Activated CD4-positive, alpha-beta memory T cell treated with anti-CD3 and anti-CD28 coated beads, Interleukin-2, amount 10 ng/mL, durations not matched to agents 7 days and 5 days (primary cell): ENCODE measurements at regions of chr1 and their contacts with region 1.

Region 1: DNA sequence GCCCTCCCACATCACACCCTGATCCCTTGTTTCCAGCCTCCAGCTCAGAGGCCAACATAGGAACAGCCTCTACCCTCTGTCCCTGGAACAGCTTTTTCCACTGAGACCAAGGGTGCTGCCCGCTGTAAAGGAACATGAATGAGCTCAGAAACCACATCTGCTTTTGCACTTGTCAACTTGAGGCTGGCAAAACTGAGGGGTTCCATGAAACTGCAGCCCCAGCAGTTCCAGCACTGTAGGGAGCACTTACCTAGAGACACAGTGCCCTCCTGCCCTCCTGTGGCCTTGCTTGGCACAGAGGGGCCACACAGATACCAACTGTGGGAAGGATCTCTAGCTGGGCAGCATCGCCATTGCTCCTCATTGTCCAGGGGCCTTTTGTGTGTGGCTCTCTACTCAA is 51.7 kb downstream of the ITPKB start:
- DNase-seq: peak; percentile 47
- H3K4me3 Mint-ChIP-seq: no peak overlapping the region
- H3K27ac Mint-ChIP-seq: no peak overlapping the region
- H3K4me1 Mint-ChIP-seq: peaks cover 87% of the 10 kb centered on the region
- H3K27me3 Mint-ChIP-seq: no peaks in the 10 kb centered on the region

Region 2: GRCh38 chr1:226549937-226550670 is 137.3 kb before region 1 on chr1:
- CTCF ChIA-PET with region 1: no interaction called
- POLR2A ChIA-PET with region 1: no interaction called
- DNase-seq: no peak
- H3K4me3 Mint-ChIP-seq: no peak overlapping the region
- H3K27ac Mint-ChIP-seq: no peak overlapping the region
- H3K4me1 Mint-ChIP-seq: peaks cover 12% of the 10 kb centered on the region
- H3K27me3 Mint-ChIP-seq: peaks cover 85% of the 10 kb centered on the region

Region 3: DNA sequence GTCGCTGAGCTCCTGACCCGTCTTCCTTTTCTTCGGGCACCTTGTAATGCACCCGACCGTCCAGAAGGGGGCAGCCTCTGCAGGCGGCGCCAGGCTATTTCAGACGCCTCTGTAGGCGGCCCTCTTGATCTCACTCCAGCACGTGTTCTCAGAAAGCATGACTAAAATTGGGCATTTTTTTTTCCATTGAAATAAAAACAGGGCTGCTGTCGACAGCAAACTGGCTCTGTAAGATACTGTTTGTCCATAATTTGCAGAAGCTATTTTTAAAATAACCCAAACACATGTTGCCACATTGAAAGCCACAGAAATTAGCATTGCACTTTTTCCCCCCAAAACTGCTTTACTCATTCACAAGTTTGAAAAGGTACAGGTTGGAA is 60.9 kb before region 1 on chr1:
- CTCF ChIA-PET with region 1: interaction called, 22 read pairs
- POLR2A ChIA-PET with region 1: no interaction called
- DNase-seq: peak; percentile 82
- H3K4me3 Mint-ChIP-seq: no peak overlapping the region
- H3K27ac Mint-ChIP-seq: no peak overlapping the region
- H3K4me1 Mint-ChIP-seq: peaks cover 17% of the 10 kb centered on the region
- H3K27me3 Mint-ChIP-seq: peaks cover 3% of the 10 kb centered on the region

Region 4: GRCh38 chr1:226662642-226663326 is 24.6 kb before region 1 on chr1:
- CTCF ChIA-PET with region 1: interaction called, 11 read pairs
- POLR2A ChIA-PET with region 1: interaction called, 113 read pairs
- DNase-seq: peak; percentile 89
- H3K4me3 Mint-ChIP-seq: peak overlapping the region; percentile 57
- H3K27ac Mint-ChIP-seq: peak overlapping the region; percentile 92
- H3K4me1 Mint-ChIP-seq: peaks cover 86% of the 10 kb centered on the region
- H3K27me3 Mint-ChIP-seq: no peaks in the 10 kb centered on the region

Region 5: DNA sequence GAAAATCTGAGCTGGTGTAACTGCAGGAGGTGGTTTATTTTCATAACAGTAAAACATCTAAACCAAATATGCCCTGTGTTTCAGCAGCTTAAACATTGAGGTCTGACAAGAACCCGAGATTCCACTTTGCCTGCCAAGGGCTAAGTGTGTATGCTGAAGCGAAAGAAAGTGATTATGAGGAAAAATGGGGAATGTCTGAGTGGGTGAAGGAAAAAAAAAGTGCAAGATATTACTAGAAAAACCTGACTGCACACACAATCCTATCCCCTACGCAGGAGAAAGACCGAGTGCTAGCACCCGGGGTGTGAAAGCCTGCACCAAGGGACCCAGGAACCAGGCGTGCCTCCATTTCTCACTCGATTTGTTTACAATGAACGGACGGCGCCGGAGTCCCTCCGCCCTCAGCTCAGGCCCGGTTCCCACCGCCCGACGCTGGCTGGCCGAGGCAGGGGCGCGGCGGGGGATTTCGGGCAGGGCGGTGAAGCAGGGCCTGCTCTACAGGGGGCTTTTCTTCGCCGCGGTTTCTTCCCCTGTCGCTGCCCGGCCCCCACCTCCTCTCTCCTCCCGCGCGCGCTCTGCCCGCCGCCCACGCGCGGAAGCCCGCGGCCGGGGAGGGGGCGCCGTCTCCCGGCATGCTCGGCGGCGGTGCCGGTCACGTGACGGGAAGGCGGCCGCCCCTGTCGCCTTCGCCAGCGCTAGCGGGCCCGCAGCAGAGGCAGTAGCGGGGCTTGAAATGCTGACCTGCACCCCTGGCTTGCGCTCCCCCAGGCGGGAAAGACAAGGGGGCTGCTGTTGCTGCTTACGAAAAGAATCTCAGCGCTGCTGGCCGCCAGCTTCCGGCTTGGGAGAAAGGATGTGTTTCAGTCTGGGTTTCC is 15.8 kb after region 1 on chr1:
- CTCF ChIA-PET with region 1: interaction called, 3 read pairs
- POLR2A ChIA-PET with region 1: interaction called, 23 read pairs
- DNase-seq: peak; percentile 79
- H3K4me3 Mint-ChIP-seq: peak overlapping the region; percentile 79
- H3K27ac Mint-ChIP-seq: peak overlapping the region; percentile 87
- H3K4me1 Mint-ChIP-seq: peaks cover 48% of the 10 kb centered on the region
- H3K27me3 Mint-ChIP-seq: no peaks in the 10 kb centered on the region

Region 6: GRCh38 chr1:226736908-226737818 is 49.7 kb after region 1 on chr1:
- CTCF ChIA-PET with region 1: interaction called, 3 read pairs
- POLR2A ChIA-PET with region 1: interaction called, 11 read pairs
- DNase-seq: peak; percentile 62
- H3K4me3 Mint-ChIP-seq: peak overlapping the region; percentile 87
- H3K27ac Mint-ChIP-seq: peak overlapping the region; percentile 92
- H3K4me1 Mint-ChIP-seq: peaks cover 57% of the 10 kb centered on the region
- H3K27me3 Mint-ChIP-seq: no peaks in the 10 kb centered on the region

Region 7: DNA sequence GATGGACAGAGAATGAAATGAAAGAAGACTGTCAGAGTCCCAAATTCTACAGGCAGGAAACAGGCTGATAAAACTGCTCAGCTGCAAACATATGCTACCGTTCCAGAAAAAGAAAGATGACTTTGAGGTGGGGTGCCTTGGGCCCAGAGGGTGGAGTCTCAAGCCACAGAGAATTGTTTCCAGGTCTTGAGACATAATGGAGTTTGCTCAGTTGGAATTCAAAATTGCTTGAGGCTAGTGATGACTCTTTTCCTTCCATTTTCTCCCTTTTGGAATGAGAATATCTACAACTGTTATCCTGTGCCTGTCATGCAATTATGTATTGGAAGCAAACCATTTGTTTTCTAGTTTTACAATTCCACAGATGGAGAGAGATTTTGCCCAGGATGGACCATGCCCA is 159.4 kb after region 1 on chr1:
- CTCF ChIA-PET with region 1: no interaction called
- POLR2A ChIA-PET with region 1: no interaction called
- DNase-seq: no peak
- H3K4me3 Mint-ChIP-seq: no peak overlapping the region
- H3K27ac Mint-ChIP-seq: no peak overlapping the region
- H3K4me1 Mint-ChIP-seq: no peaks in the 10 kb centered on the region
- H3K27me3 Mint-ChIP-seq: peaks cover 4% of the 10 kb centered on the region